GM12878 (cell line): ENCODE measurements at regions of chr1 and their contacts with region 1.

Region 1: DNA sequence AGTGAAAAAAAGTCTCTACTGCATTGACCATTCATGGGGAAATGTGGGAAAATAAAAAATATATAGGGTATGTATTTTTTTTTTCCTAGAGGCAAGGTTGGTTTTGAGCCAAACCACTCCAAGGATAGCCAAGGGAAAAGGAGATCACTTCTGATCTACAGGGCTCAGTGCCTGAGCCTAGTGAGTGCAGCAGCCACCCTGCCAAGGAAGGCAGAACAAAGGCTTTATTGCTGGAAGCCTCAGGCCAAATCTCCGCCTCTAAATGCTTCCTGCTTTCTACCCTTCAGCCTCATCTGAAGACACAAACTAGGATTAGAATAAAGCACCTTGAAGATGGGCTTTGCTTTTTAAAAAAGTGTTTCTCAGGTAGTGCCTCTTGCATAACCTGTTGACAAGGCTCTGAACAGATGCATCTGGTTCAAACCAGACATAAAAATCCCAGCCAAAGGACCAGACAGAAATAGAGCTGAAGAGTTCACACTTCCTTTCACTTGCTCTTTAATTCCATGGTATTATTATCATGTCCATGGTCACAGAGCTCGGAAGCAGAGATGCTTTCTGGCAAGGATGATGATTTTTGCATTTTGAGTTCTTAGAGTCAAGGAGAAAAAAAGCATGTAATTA is 10.5 kb downstream of the C1orf115 start:
- DNase-seq: no peak
- ATAC-seq: no peak
- H3K4me3 ChIP-seq: no peak overlapping the region
- H3K27ac ChIP-seq: no peak overlapping the region
- H3K4me1 ChIP-seq: no peaks in the 10 kb centered on the region
- H3K27me3 ChIP-seq: no peaks in the 10 kb centered on the region
- CTCF ChIP-seq: no peak
- EP300 ChIP-seq: no peak
- POLR2A ChIP-seq: no peak
- RAD21 ChIP-seq: no peak

Region 2: GRCh38 chr1:220594356-220594755 is 106.3 kb before region 1 on chr1:
- CTCF ChIA-PET with region 1: no interaction called
- POLR2A ChIA-PET with region 1: no interaction called
- RAD21 ChIA-PET with region 1: no interaction called
- SMC1A ChIA-PET with region 1: no interaction called
- in situ Hi-C with region 1: no loop called
- intact Hi-C with region 1: no loop called
- DNase-seq: no peak
- ATAC-seq: no peak
- H3K4me3 ChIP-seq: no peak overlapping the region
- H3K27ac ChIP-seq: no peak overlapping the region
- H3K4me1 ChIP-seq: no peaks in the 10 kb centered on the region
- H3K27me3 ChIP-seq: no peaks in the 10 kb centered on the region
- CTCF ChIP-seq: no peak
- EP300 ChIP-seq: no peak
- POLR2A ChIP-seq: no peak
- RAD21 ChIP-seq: no peak

Region 3: DNA sequence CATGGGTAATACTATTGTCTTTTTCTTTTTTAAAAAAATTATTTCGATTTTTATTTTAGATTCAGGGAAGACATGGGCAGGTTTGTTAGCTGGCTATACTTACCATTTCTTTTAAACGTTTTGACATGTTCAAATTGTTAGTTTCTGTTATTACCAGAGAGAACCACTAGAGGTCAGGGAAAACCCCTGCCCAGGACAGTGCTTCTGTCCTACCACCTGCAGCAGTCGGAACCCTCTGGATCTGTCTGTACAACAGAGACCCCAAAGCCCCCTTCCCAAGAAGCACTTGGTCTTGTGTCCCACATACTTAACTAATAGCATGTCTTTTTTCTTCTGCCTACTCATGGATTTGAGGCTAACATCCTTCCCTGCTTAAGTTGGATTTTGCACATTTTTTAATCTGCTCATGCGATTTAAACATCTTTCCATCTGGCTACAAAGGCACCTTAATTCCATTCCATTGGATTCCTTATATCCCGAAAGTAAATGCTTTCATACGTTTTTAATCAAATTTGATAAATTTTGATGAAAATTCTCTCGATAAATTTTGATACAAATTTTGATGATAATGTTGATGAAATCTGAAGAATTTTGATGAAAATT is 20.5 kb before region 1 on chr1:
- CTCF ChIA-PET with region 1: interaction called, 10 read pairs
- POLR2A ChIA-PET with region 1: no interaction called
- RAD21 ChIA-PET with region 1: interaction called, 7 read pairs
- SMC1A ChIA-PET with region 1: no interaction called
- in situ Hi-C with region 1: no loop called
- intact Hi-C with region 1: no loop called
- DNase-seq: no peak
- ATAC-seq: peak; percentile 97
- H3K4me3 ChIP-seq: no peak overlapping the region
- H3K27ac ChIP-seq: no peak overlapping the region
- H3K4me1 ChIP-seq: no peaks in the 10 kb centered on the region
- H3K27me3 ChIP-seq: no peaks in the 10 kb centered on the region
- CTCF ChIP-seq: peak; percentile 63 to 77 (median 66)
- EP300 ChIP-seq: no peak
- POLR2A ChIP-seq: no peak
- RAD21 ChIP-seq: peak; percentile 72

Region 4: DNA sequence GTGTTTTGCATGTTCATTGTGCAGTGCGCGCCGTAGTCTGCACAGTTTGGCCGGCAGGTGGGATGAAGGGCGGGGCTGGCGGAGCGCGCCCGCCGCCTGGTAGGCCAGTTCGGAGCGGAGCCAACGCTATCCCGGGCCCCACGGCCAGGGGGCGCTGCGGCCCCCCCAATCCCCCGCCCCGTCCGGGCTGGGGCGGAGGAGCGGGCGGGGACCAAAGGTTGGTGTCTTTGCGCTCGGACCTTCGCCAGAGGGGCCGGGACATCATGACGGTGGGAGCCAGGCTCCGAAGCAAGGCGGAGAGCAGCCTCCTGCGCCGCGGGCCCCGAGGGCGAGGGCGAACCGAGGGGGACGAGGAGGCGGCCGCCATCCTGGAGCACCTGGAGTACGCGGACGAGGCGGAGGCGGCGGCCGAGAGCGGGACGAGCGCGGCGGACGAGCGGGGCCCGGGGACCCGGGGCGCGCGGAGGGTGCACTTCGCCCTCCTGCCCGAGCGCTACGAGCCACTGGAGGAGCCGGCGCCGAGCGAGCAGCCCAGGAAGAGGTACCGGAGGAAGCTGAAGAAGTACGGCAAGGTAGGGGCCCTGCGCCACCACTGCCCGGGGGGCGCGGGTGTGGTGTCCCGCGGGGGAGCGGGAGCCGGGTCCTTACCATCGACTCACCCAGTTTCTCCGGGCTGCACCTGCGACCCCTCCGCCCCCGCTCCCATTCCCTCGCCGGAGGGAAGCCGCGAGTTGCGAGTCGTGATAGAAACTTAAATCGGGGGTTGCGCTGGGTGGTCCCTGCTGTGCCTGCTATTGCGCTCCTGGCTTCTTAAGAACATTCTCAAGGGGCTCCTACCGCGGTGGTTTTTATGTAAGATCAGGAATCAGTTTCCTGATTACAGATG is 10.3 kb before region 1 on chr1 and contains the start of gene C1orf115:
- CTCF ChIA-PET with region 1: interaction called, 13 read pairs
- POLR2A ChIA-PET with region 1: no interaction called
- RAD21 ChIA-PET with region 1: interaction called, 5 read pairs
- SMC1A ChIA-PET with region 1: interaction called, 7 read pairs
- in situ Hi-C with region 1: no loop called
- intact Hi-C with region 1: no loop called
- DNase-seq: no peak
- ATAC-seq: peak; percentile 98
- H3K4me3 ChIP-seq: peak within 1 kb of the TSS; percentile 44; the same call in 1 of the 2 replicates
- H3K27ac ChIP-seq: no peak within 1 kb of the TSS
- H3K4me1 ChIP-seq: no peaks in the 10 kb centered on the region
- H3K27me3 ChIP-seq: 0 out of 4 replicates have a peak, but pooled peaks cover 0 to 1% of the 10 kb centered on the region in 2 experiments
- CTCF ChIP-seq: peak; percentile 76 to 95 (median 85)
- EP300 ChIP-seq: no peak
- POLR2A ChIP-seq: no peak
- RAD21 ChIP-seq: peak; percentile 54
- polyA plus RNA-seq, gene C1orf115: 0.52 to 0.95 TPM

Region 5: DNA sequence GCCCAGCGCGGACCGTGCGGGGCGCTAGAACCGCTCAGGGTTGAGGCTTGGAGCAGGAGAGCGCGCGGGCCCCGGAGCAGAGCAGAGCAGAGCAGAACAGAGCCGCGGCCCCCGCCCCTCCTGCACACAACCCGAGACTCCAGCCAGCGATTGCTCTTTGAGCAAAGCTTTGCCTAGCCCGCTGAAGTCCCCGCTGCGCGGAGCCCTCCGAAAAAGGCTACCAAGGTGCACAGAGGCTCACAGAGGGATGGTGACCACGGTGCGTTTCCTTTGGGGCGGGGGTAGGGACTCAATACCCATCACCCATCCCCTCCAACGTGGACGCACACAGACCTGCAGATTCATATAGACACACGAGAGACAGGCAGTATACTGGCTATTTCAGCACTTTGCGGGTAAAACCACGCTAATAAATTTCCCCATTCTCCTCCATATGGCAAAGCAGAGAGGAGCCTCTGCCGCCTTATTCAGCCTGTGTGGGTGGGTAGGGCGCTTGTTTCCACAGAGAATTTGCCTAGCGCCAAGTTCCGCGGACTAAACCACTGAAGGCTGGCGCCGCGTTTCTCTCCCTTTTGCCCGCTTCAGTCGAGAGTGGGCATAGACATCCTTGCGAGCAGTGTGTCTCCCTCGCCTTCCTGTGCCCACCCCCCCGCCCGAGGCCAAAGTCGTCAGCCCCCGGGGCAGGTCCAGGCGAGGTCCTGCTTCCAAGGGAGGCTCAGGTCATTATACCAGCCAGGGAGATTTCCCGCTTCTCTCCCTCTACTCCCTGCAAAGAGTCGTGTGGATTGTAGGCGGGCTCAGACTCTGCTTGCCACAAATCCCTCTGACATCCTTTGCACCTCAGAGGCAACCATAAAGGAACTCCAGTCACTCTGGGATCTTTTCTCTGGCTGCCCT is 187.1 kb after region 1 on chr1:
- CTCF ChIA-PET with region 1: no interaction called
- POLR2A ChIA-PET with region 1: no interaction called
- RAD21 ChIA-PET with region 1: no interaction called
- SMC1A ChIA-PET with region 1: no interaction called
- in situ Hi-C with region 1: no loop called
- intact Hi-C with region 1: no loop called
- DNase-seq: no peak
- ATAC-seq: peak; percentile 40
- H3K4me3 ChIP-seq: no peak overlapping the region
- H3K27ac ChIP-seq: no peak overlapping the region
- H3K4me1 ChIP-seq: no peaks in the 10 kb centered on the region
- H3K27me3 ChIP-seq: peaks cover 10 to 11% of the 10 kb centered on the region in 2 experiments; a peak in 3 of 4 replicates
- CTCF ChIP-seq: no peak
- EP300 ChIP-seq: no peak
- POLR2A ChIP-seq: no peak
- RAD21 ChIP-seq: no peak